MCF 10A (cell line): ENCODE measurements at regions of chr5 and their contacts with region 1.

Region 1: GRCh38 chr5:141524604-141525597 is 36.0 kb downstream of the PCDHGC5 start:
- DNase-seq: peak; percentile 97
- H3K4me3 Mint-ChIP-seq: no peak overlapping the region
- H3K27ac Mint-ChIP-seq: peak overlapping the region; percentile 60
- H3K4me1 Mint-ChIP-seq: peaks cover 45% of the 10 kb centered on the region
- H3K27me3 Mint-ChIP-seq: no peaks in the 10 kb centered on the region
- CTCF ChIP-seq: peak; percentile 100

Region 2: GRCh38 chr5:141208478-141208877 is 316.4 kb before region 1 on chr5 and contains the start of gene PCDHB12:
- CTCF ChIA-PET with region 1: interaction called, 7 read pairs
- POLR2A ChIA-PET with region 1: interaction called, 3 read pairs
- intact Hi-C with region 1: loop called (anchors 2 kb)
- DNase-seq: peak; percentile 60
- H3K4me3 Mint-ChIP-seq: peak within 1 kb of the TSS; percentile 72
- H3K27ac Mint-ChIP-seq: no peak within 1 kb of the TSS
- H3K4me1 Mint-ChIP-seq: no peaks in the 10 kb centered on the region
- H3K27me3 Mint-ChIP-seq: no peaks in the 10 kb centered on the region
- CTCF ChIP-seq: peak; percentile 38
- total RNA-seq, gene PCDHB12: 1.6 and 2.3 TPM in 2 replicates

Region 3: DNA sequence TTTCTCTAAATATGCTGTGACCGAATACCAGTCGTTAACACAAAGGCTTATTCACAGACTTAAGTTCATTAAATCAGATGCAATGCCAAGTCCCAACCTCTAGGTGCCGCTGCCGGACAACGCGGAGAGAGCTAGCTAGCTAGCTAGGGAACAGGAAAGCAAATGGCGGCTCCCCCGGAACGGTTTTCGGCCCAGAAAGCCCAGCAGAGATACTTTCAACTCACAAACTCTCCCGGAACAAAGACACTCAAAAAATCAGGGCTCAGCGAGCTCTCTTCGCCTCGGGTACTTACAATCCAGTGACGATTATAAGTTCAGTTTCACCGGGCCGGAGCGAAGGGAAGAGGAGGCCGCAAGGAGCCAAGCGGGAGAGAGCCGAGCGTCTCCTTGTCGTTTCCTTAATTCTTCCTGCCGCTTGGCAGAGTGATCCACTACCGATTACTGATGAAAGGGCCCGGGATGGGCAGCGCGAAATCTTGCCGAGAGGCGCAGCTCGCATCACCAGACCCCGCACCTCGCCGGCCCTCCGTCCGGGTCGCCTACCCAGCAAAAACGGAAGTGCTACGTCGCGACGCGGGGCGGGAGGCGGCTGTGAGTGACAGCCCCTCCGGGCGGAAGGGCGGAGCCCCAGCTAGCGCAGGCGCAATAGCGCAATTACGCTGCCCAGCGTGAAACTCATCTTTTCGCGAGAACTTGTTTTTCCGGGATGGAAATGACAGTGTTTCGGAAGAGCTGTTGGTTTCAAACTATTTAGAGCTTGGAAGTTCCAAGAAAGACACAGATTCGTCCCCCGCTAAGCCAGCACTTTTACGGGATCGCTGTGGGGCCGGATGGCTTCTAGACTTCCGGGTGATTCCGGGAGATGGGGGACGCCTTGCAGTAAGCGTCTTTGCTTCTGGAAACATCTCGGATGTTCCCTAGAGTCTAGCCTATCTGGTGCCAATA is 204.4 kb before region 1 on chr5 and contains the start of gene TAF7:
- CTCF ChIA-PET with region 1: interaction called, 56 read pairs
- POLR2A ChIA-PET with region 1: interaction called, 19 read pairs
- intact Hi-C with region 1: loop called (anchors 1 kb)
- DNase-seq: peak; percentile 95
- H3K4me3 Mint-ChIP-seq: peak within 1 kb of the TSS; percentile 99
- H3K27ac Mint-ChIP-seq: peak within 1 kb of the TSS; percentile 100
- H3K4me1 Mint-ChIP-seq: peaks cover 14% of the 10 kb centered on the region
- H3K27me3 Mint-ChIP-seq: no peaks in the 10 kb centered on the region
- CTCF ChIP-seq: peak; percentile 90
- total RNA-seq, gene TAF7: 81.3 and 94.9 TPM in 2 replicates

Region 4: GRCh38 chr5:141402553-141403260 is 122.2 kb before region 1 on chr5 and contains the start of gene PCDHGA9:
- CTCF ChIA-PET with region 1: interaction called, 32 read pairs
- POLR2A ChIA-PET with region 1: interaction called, 3 read pairs
- intact Hi-C with region 1: no loop called
- DNase-seq: peak; percentile 43
- H3K4me3 Mint-ChIP-seq: no peak within 1 kb of the TSS
- H3K27ac Mint-ChIP-seq: no peak within 1 kb of the TSS
- H3K4me1 Mint-ChIP-seq: no peaks in the 10 kb centered on the region
- H3K27me3 Mint-ChIP-seq: no peaks in the 10 kb centered on the region
- CTCF ChIP-seq: no peak
- total RNA-seq, gene PCDHGA9: 0.89 and 1.3 TPM in 2 replicates

Region 5: DNA sequence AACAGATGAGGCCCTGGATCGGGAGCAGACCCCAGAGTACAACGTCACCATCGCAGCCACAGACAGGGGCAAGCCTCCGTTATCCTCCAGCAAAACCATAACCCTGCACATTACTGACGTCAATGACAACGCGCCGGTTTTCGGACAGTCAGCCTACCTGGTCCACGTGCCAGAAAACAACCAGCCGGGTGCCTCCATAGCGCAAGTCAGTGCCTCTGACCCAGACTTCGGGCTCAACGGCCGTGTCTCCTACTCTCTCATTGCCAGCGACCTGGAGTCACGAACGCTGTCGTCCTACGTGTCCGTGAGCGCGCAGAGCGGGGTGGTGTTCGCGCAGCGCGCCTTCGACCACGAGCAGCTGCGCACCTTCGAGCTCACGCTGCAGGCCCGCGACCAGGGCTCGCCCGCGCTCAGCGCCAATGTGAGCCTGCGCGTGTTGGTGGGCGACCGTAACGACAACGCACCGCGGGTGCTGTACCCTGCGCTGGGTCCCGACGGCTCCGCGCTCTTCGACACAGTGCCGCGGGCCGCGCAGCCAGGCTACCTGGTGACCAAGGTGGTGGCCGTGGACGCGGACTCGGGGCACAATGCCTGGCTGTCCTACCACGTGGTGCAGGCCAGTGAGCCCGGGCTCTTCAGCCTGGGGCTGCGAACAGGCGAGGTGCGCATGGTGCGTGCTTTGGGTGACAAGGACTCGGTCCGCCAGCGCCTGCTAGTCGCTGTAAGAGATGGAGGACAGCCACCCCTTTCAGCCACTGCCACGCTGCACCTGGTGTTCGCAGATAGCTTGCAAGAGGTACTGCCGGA is 105.6 kb before region 1 on chr5:
- CTCF ChIA-PET with region 1: interaction called, 37 read pairs
- POLR2A ChIA-PET with region 1: interaction called, 5 read pairs
- intact Hi-C with region 1: loop called (anchors 1 kb)
- DNase-seq: no peak
- H3K4me3 Mint-ChIP-seq: no peak overlapping the region
- H3K27ac Mint-ChIP-seq: no peak overlapping the region
- H3K4me1 Mint-ChIP-seq: no peaks in the 10 kb centered on the region
- H3K27me3 Mint-ChIP-seq: no peaks in the 10 kb centered on the region
- CTCF ChIP-seq: no peak

Region 6: DNA sequence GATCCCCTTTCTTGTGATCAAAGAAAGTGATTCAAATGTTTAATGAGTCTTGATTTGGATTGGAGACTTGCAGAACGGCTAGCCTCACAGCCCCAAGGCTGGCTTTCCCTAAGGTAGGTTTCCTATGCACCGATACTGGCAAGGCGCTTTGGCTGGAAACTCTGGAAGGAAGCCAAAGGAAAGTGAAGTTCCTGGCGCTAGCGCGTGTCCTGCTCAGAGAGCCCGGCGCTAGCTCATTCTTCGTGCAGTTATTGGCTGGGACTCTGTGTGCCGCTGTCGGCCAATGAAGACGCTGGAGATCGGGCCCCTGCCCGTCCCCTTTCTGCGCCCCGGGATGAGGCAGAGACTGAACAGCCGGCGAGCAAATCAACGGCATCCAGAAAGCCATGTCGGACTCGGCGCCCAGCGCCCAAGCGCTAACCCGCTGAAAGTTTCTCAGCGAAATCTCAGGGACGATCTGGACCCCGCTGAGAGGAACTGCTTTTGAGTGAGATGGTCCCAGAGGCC is 49.2 kb before region 1 on chr5 and contains the start of gene PCDHGC3:
- CTCF ChIA-PET with region 1: interaction called, 75 read pairs
- POLR2A ChIA-PET with region 1: interaction called, 70 read pairs
- intact Hi-C with region 1: loop called (anchors 1 kb)
- DNase-seq: peak; percentile 98
- H3K4me3 Mint-ChIP-seq: peak within 1 kb of the TSS; percentile 94
- H3K27ac Mint-ChIP-seq: peak within 1 kb of the TSS; percentile 84
- H3K4me1 Mint-ChIP-seq: peaks cover 18% of the 10 kb centered on the region
- H3K27me3 Mint-ChIP-seq: no peaks in the 10 kb centered on the region
- CTCF ChIP-seq: peak; percentile 55
- total RNA-seq, gene PCDHGC3: 17.3 and 31.7 TPM in 2 replicates

Region 7: GRCh38 chr5:141547488-141547887 is 22.6 kb after region 1 on chr5:
- CTCF ChIA-PET with region 1: interaction called, 11 read pairs
- POLR2A ChIA-PET with region 1: interaction called, 5 read pairs
- intact Hi-C with region 1: no loop called
- DNase-seq: peak; percentile 39
- H3K4me3 Mint-ChIP-seq: no peak overlapping the region
- H3K27ac Mint-ChIP-seq: no peak overlapping the region
- H3K4me1 Mint-ChIP-seq: no peaks in the 10 kb centered on the region
- H3K27me3 Mint-ChIP-seq: no peaks in the 10 kb centered on the region
- CTCF ChIP-seq: no peak